Gastrocnemius medialis (tissue), 4 donors: ENCODE measurements at regions of chr19 and their contacts with region 1.

Region 1: GRCh38 chr19:5967994-5968430 is 9.9 kb downstream of the RANBP3 start:
- DNase-seq: peak; percentile 39 to 41
- ATAC-seq: peak; percentile 85
- H3K4me3 ChIP-seq: peak overlapping the region in 2 of 4 donors; percentile 5 to 23
- H3K27ac ChIP-seq: peak overlapping the region; percentile 27 to 54 (median 50)
- H3K4me1 ChIP-seq: peaks cover 43 to 53% of the 10 kb centered on the region in 2 donors
- H3K27me3 ChIP-seq: no peaks in the 10 kb centered on the region
- CTCF ChIP-seq: peak; percentile 26 to 90 (median 80)
- POLR2A ChIP-seq: no peak

Region 2: DNA sequence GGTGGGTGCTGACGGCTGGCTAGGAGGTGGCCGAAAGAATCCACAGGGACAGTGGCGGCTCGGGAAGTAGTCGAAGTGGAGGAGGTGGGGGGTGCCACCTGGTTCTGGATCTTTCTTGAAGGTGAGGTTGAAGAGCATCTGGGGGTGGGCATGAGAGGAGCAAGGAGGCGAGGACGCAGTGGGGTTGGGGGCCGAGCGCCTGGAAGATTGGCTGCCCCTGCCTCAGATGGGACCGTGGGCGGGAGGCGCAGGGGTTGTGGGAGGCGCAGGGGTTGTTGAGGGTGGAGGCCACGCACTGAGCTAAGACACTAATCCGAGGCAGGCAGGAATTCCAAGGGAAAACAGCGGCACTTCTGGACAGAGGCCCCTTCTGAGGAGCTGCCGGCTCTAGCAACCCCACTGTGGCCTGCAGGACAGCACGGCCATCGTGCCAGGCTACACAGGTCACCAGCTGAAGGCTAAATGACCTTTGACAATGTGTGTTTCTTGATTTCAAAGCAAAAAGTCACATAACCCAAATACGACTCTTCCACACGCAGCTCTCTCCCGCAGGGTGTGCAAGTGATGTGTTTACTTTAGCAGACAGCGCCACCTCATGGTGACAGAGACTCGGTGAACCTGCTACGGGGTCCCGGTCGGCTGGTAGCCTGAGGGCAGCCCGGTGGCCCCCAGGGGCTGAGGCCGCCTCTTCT is 54.0 kb after region 1 on chr19:
- in situ Hi-C with region 1: no loop called
- intact Hi-C with region 1: loop called (anchors 1 kb)
- DNase-seq: peak; percentile 32 to 39
- ATAC-seq: peak; percentile 82 to 83
- H3K4me3 ChIP-seq: no peak overlapping the region
- H3K27ac ChIP-seq: peak overlapping the region in 2 of 4 donors; percentile 39 to 52
- H3K4me1 ChIP-seq: no peaks in the 10 kb centered on the region
- H3K27me3 ChIP-seq: no peaks in the 10 kb centered on the region
- CTCF ChIP-seq: peak; percentile 50 to 78 (median 74)
- POLR2A ChIP-seq: no peak